MCF 10A (cell line): ENCODE measurements at regions of chrX and their contacts with region 1.

Region 1: DNA sequence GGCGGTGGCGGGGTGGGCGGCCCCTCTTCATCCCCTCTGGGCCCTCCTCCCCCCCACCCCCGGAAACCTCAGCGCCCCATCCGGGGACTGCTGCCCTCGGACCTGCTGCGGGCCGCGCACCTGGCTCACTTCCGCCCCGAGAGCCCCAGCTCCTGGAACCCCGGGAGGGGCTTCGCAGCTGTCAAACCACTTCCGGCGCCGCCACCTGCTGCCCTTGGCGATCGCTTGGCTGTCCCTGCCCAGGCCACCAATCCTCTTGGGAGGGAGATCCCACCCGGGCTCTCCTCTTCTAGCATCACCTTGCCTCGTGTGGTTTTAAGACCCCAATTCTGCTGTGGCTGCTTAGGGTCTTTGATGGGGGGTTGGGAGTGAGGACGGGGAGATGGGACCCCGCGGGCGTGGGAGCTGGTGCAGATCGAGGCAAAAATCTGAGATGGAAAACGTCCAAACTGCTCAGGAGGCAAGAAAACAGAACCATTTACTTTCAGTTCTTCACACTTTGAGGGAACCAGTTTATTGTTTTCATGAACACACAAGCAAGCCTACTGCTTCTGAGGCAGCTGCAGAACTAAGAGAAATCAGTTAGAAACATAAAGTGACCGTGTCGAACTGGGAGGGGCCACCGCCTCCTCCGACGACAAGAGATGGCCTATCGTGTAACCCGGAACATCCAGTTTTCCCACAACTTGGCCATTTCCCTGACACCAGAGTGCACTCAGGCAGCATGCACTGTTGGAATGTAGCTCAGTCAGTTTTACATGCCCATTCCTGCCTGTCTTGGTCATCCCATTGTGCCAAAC is 779 bp downstream of the MTMR1 start:
- DNase-seq: peak; percentile 66
- H3K4me3 Mint-ChIP-seq: peak overlapping the region; percentile 75
- H3K27ac Mint-ChIP-seq: peak overlapping the region; percentile 69
- H3K4me1 Mint-ChIP-seq: peaks cover 14% of the 10 kb centered on the region
- H3K27me3 Mint-ChIP-seq: peaks cover 14% of the 10 kb centered on the region
- CTCF ChIP-seq: no peak

Region 2: DNA sequence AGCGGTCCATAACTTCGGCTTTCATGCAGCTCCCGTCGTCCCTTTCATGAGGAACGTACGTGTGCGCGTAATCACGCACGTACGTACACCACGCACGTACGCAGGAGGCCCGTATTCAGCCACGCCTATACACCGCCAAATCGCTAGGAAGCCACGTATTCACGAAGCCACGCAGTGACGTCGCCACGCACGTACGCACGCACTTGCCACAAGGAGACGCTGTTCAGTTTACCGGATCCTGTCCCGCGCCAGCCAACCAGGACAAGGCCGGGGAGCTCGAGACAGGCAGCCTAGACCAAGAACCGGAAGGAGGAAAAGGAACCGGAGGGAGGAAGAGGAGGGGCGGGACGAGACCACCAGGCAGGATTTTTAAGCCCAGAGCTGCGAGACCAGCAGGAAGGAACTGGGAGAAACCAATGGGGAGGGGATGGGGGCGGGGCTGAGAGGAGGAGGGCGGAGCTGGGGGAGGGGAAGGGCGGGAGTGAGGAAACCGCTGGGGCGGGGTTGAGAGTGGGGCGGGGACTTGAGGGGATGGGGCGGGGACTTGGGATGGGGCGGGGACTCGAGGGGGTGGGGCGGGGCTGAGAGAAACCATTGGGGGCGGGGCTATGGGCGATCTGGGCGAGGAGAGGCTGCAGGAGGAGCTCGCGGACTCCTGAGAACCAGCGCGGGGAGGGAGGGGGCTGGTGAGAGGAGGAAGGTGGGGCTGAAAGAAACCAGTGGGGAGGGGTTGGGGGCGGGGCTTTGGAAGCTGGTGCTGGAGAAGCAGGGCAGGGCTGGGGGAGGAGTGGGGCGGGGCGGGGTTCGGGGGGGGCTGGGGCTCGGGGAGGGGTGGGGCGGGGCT is 755.3 kb before region 1 on chrX and contains the start of gene EOLA2:
- CTCF ChIA-PET with region 1: interaction called, 4 read pairs
- POLR2A ChIA-PET with region 1: interaction called, 12 read pairs
- intact Hi-C with region 1: no loop called
- DNase-seq: peak; percentile 95
- H3K4me3 Mint-ChIP-seq: peak within 1 kb of the TSS; percentile 84
- H3K27ac Mint-ChIP-seq: peak within 1 kb of the TSS; percentile 100
- H3K4me1 Mint-ChIP-seq: no peaks in the 10 kb centered on the region
- H3K27me3 Mint-ChIP-seq: peaks cover 9% of the 10 kb centered on the region
- CTCF ChIP-seq: peak; percentile 13
- total RNA-seq, gene EOLA2: 47.4 and 52.8 TPM in 2 replicates

Region 3: DNA sequence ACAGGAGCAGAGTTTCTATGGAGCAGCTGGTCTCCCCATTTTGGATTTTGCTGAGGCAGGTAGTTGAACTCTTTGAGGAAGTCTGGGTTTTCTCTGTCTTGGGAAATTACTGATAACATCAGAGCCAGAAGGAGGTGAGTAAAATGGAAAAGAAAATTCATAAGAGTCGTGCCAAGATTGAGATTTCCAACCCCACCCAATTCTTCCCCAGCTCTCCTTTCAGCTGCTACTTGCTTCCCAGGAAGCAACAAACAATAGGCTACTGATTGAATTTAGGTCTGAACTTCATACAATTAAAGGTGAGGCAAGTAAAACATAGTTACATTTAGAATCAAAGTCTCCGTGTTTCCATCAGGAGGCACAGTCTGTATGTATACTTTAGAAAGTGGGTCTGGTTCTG is 701.1 kb before region 1 on chrX:
- CTCF ChIA-PET with region 1: no interaction called
- POLR2A ChIA-PET with region 1: no interaction called
- intact Hi-C with region 1: no loop called
- DNase-seq: no peak
- H3K4me3 Mint-ChIP-seq: no peak overlapping the region
- H3K27ac Mint-ChIP-seq: no peak overlapping the region
- H3K4me1 Mint-ChIP-seq: peaks cover 5% of the 10 kb centered on the region
- H3K27me3 Mint-ChIP-seq: peaks cover 12% of the 10 kb centered on the region
- CTCF ChIP-seq: no peak

Region 4: DNA sequence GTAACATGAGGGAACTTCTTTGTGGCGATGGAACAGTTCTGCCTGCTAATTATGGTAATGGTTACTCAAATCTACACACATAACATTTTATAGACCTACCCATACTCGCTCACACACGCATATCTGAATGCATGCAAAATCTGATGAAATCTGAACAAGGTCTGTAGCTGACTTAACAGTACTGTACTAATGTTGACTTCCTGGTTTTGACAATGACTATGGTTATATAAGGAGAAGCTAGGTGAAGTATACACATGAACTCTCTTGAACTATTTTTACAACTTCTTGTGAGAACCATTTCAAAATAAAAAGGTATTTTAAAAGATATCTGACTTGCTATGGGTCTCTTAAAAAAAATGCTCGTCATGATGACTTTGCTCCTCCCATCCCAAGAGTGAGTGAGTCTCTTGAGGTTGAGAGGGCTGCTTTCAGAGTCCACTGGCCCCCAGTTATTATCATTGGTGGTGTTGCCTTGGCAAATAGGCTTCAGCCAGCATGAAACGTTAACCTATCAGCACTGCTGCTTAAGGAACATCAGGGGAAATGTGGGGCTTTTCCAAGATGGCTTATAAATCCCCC is 99.1 kb after region 1 on chrX:
- CTCF ChIA-PET with region 1: no interaction called
- POLR2A ChIA-PET with region 1: no interaction called
- intact Hi-C with region 1: no loop called
- DNase-seq: no peak
- H3K4me3 Mint-ChIP-seq: no peak overlapping the region
- H3K27ac Mint-ChIP-seq: no peak overlapping the region
- H3K4me1 Mint-ChIP-seq: no peaks in the 10 kb centered on the region
- H3K27me3 Mint-ChIP-seq: no peaks in the 10 kb centered on the region
- CTCF ChIP-seq: no peak